CD14-positive monocyte (primary cell): ENCODE measurements at regions of chr7 and their contacts with region 1.

Region 1: GRCh38 chr7:142646386-142647140 is 102.7 kb upstream of the PRSS1 start:
- DNase-seq: peak; percentile 1 to 15 (median 2)
- H3K4me3 ChIP-seq: peak overlapping the region in 1 of 3 experiments; percentile 13
- H3K4me3 Mint-ChIP-seq: peak overlapping the region; percentile 28 to 78
- H3K27ac ChIP-seq: no peak overlapping the region
- H3K27ac Mint-ChIP-seq: no peak overlapping the region
- H3K4me1 ChIP-seq: peaks cover 7 to 8% of the 10 kb centered on the region in 2 donors
- H3K4me1 Mint-ChIP-seq: peaks cover 11% of the 10 kb centered on the region
- H3K27me3 ChIP-seq: peaks cover 5 to 6% of the 10 kb centered on the region in 2 donors
- H3K27me3 Mint-ChIP-seq: peaks cover 7 to 17% (median 9%) of the 10 kb centered on the region in 3 donors
- CTCF ChIP-seq: no peak

Region 2: GRCh38 chr7:142134909-142135308 is 511.7 kb before region 1 on chr7:
- intact Hi-C with region 1: no loop called
- DNase-seq: no peak
- H3K4me3 ChIP-seq: no peak overlapping the region
- H3K4me3 Mint-ChIP-seq: no peak overlapping the region
- H3K27ac ChIP-seq: no peak overlapping the region
- H3K27ac Mint-ChIP-seq: no peak overlapping the region
- H3K4me1 ChIP-seq: no peaks in the 10 kb centered on the region
- H3K4me1 Mint-ChIP-seq: no peaks in the 10 kb centered on the region
- H3K27me3 ChIP-seq: no peaks in the 10 kb centered on the region
- H3K27me3 Mint-ChIP-seq: peaks cover 0 to 3% (median 0%) of the 10 kb centered on the region in 3 donors
- CTCF ChIP-seq: no peak

Region 3: DNA sequence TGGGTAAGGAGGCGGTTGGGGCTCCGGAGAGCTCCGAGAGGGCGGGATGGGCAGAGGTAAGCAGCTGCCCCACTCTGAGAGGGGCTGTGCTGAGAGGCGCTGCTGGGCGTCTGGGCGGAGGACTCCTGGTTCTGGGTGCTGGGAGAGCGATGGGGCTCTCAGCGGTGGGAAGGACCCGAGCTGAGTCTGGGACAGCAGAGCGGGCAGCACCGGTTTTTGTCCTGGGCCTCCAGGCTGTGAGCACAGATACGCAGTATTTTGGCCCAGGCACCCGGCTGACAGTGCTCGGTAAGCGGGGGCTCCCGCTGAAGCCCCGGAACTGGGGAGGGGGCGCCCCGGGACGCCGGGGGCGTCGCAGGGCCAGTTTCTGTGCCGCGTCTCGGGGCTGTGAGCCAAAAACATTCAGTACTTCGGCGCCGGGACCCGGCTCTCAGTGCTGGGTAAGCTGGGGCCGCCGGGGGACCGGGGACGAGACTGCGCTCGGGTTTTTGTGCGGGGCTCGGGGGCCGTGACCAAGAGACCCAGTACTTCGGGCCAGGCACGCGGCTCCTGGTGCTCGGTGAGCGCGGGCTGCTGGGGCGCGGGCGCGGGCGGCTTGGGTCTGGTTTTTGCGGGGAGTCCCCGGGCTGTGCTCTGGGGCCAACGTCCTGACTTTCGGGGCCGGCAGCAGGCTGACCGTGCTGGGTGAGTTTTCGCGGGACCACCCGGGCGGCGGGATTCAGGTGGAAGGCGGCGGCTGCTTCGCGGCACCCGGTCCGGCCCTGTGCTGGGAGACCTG is 150.2 kb after region 1 on chr7:
- intact Hi-C with region 1: loop called in 1 of 2 experiments (anchors 5 kb)
- DNase-seq: no peak
- H3K4me3 ChIP-seq: peak overlapping the region in 2 of 3 experiments; percentile 11 to 54
- H3K4me3 Mint-ChIP-seq: peak overlapping the region; percentile 75 to 93
- H3K27ac ChIP-seq: no peak overlapping the region
- H3K27ac Mint-ChIP-seq: peak overlapping the region in 2 of 7 donors; percentile 44 to 88
- H3K4me1 ChIP-seq: peaks cover 15 to 17% of the 10 kb centered on the region in 2 donors
- H3K4me1 Mint-ChIP-seq: peaks cover 20% of the 10 kb centered on the region
- H3K27me3 ChIP-seq: peaks cover 48 to 50% of the 10 kb centered on the region in 2 donors
- H3K27me3 Mint-ChIP-seq: peaks cover 49 to 63% (median 59%) of the 10 kb centered on the region in 3 donors
- CTCF ChIP-seq: no peak